OCI-LY7 (cell line): ENCODE measurements at regions of chr3 and their contacts with region 1.

Region 1: DNA sequence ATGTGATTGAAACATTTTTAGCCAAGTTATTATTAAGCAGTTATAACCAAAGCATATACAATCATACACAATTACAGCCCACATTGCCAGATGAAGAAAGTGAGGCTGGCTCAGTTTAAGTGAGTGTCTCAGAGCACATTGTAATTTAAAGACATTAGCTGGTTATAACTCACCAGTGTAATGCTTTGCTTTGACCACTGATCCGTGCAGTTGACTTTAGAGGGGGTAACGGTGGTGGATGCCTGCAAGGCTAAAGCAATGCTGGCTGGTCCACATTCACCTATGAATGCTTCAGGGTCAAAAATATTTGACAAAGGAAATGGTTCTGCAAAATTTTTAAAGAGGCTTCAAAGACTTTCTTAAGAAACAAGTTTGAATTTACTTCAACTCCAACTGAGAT is 1.2 kb downstream of the C3orf85 start:
- DNase-seq: no peak
- H3K4me3 ChIP-seq: no peak overlapping the region
- H3K27ac ChIP-seq: no peak overlapping the region
- H3K4me1 ChIP-seq: no peaks in the 10 kb centered on the region
- CTCF ChIP-seq: no peak

Region 2: DNA sequence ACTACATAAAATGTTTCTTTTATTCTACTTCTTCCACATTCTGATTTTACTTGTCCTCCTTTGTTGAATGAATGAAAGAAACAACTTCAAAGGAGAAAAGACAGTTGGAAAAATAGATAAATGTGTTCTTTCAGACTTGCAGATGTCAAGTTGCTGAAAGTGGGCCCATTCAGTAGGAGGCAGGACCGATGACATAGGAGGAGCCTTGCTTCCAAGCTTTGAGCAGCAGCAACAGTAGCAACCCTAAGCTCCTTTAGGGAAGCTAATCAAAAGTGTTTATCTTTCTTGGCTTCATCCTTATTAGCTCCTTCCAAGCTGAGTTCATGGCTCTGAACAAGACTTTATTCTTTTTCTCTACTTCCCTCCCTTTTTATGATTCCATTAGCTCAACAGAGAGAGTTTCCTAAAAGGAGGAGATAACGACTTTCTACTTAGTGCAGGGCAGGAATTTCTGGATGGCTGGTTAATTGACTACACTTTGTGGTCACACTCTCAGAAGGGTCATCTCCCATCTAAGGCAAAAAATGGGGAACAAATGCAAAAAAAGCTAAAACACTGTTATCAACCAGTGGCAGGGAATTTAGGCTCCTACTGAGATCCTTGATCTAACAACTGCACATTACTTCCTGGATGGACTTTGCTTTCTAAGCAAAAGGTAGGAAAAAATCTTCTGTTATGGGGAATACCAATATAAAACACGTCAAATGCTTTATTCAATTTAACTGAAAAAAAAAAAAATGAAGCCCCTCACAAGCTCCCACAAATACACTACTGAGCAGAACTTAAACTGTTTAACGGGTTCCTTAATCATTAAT is 24.6 kb before region 1 on chr3:
- CTCF ChIA-PET with region 1: no interaction called
- POLR2A ChIA-PET with region 1: interaction called, 11 read pairs
- intact Hi-C with region 1: no loop called
- DNase-seq: no peak
- H3K4me3 ChIP-seq: no peak overlapping the region
- H3K27ac ChIP-seq: no peak overlapping the region
- H3K4me1 ChIP-seq: no peaks in the 10 kb centered on the region
- CTCF ChIP-seq: no peak